Heart left ventricle (tissue), 16 donors: ENCODE measurements at regions of chr3 and their contacts with region 1.

Region 1: DNA sequence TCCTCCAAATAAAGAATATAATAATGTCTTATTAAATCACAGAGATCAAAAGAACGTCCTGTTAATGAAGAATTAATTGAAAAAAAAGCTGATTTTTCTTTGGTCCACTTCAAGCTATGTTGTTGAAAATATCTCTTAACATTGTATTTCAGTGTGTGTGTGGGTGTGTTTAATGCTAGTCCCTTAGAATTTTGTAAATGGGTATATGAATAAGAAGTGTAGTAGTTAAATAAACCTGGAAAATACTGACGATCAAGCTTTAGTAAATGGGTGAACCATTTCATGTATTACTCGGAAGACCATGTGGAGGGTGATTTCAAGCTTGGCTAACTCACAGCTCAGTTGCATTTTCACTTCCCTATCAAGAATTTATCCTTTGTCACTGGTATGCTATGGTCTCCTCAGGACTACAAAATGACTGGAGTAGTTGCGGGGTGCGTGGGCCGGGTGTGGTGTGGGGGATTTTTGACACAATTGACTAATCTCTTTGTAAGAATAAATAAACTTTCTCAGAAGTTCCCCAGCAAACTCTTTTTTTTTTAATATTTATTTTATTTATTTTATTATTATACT is 586.4 kb downstream of the GRM7 start:
- DNase-seq: no peak
- ATAC-seq: no peak
- H3K4me3 ChIP-seq: no peak overlapping the region
- H3K27ac ChIP-seq: no peak overlapping the region
- H3K4me1 ChIP-seq: peaks cover 0 to 15% (median 0%) of the 10 kb centered on the region in 12 donors
- H3K27me3 ChIP-seq: no peaks in the 10 kb centered on the region
- CTCF ChIP-seq: no peak
- POLR2A ChIP-seq: no peak

Region 2: GRCh38 chr3:7285505-7285904 is 161.8 kb before region 1 on chr3:
- intact Hi-C with region 1: no loop called
- DNase-seq: no peak
- ATAC-seq: no peak
- H3K4me3 ChIP-seq: no peak overlapping the region
- H3K27ac ChIP-seq: no peak overlapping the region
- H3K4me1 ChIP-seq: peaks cover 0 to 5% (median 0%) of the 10 kb centered on the region in 12 donors
- H3K27me3 ChIP-seq: no peaks in the 10 kb centered on the region
- CTCF ChIP-seq: peak in 9 of 12 donors; percentile 5 to 44 (median 29)
- POLR2A ChIP-seq: no peak

Region 3: GRCh38 chr3:7309641-7310102 is 137.6 kb before region 1 on chr3:
- intact Hi-C with region 1: loop called in 1 of 10 experiments (anchors 10 kb)
- DNase-seq: peak; percentile 40 to 60 (median 54)
- ATAC-seq: peak in 3 of 4 donors; percentile 83 to 91 (median 87)
- H3K4me3 ChIP-seq: no peak overlapping the region
- H3K27ac ChIP-seq: peak overlapping the region in 5 of 12 donors; percentile 10 to 39 (median 32)
- H3K4me1 ChIP-seq: peaks cover 0 to 25% (median 8%) of the 10 kb centered on the region in 12 donors
- H3K27me3 ChIP-seq: no peaks in the 10 kb centered on the region
- CTCF ChIP-seq: no peak
- POLR2A ChIP-seq: no peak

Region 4: GRCh38 chr3:7504886-7505775 is 57.8 kb after region 1 on chr3:
- intact Hi-C with region 1: loop called in 1 of 10 experiments (anchors 5 kb)
- DNase-seq: peak in 2 of 5 donors; percentile 46 to 60
- ATAC-seq: peak; percentile 58 to 94 (median 90)
- H3K4me3 ChIP-seq: no peak overlapping the region
- H3K27ac ChIP-seq: peak overlapping the region in 11 of 12 donors; percentile 24 to 70 (median 63)
- H3K4me1 ChIP-seq: peaks cover 0 to 18% (median 3%) of the 10 kb centered on the region in 12 donors
- H3K27me3 ChIP-seq: no peaks in the 10 kb centered on the region
- CTCF ChIP-seq: no peak
- POLR2A ChIP-seq: no peak

Region 5: GRCh38 chr3:8087951-8088350 is 640.7 kb after region 1 on chr3:
- intact Hi-C with region 1: no loop called
- DNase-seq: no peak
- ATAC-seq: no peak
- H3K4me3 ChIP-seq: no peak overlapping the region
- H3K27ac ChIP-seq: no peak overlapping the region
- H3K4me1 ChIP-seq: no peaks in the 10 kb centered on the region
- H3K27me3 ChIP-seq: no peaks in the 10 kb centered on the region
- CTCF ChIP-seq: no peak
- POLR2A ChIP-seq: no peak